Gastrocnemius medialis (tissue), 4 donors: ENCODE measurements at regions of chr12 and their contacts with region 1.

Region 1: DNA sequence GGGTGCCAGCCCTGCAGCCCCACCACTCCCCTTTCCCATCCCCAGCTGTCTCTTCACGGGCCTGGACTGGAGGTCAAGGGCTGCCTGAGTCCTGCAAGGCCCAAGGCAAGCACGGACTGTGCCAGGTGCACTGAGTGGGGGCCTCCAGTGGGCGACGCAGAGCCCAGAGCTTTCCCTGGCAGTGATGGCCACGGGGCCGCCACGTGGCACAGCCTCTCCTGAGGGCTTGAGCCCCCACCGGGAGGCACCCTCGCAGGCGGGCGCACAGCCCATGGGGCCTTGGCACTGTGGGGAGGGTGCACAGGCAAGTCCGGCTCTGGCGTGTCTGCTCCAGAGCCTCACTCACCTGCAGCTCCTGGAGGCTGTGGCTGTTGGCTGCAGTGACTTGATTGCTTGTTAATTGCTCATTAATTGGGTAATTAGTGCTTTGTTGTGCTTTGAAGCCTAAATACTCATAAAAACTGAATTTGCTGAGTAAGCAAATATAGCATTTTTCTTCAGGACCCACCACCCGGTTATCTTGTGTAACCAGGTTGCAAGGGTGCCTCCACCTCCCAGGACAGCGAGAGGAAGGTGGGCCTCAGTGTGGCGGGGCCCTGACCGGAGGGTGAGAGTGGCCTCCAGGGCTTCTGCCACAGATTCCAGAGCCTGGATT is 48.5 kb downstream of the FBRSL1 start:
- DNase-seq: no peak
- ATAC-seq: no peak
- H3K4me3 ChIP-seq: no peak overlapping the region
- H3K27ac ChIP-seq: no peak overlapping the region
- H3K4me1 ChIP-seq: no peaks in the 10 kb centered on the region
- H3K27me3 ChIP-seq: no peaks in the 10 kb centered on the region
- CTCF ChIP-seq: no peak
- POLR2A ChIP-seq: no peak

Region 2: DNA sequence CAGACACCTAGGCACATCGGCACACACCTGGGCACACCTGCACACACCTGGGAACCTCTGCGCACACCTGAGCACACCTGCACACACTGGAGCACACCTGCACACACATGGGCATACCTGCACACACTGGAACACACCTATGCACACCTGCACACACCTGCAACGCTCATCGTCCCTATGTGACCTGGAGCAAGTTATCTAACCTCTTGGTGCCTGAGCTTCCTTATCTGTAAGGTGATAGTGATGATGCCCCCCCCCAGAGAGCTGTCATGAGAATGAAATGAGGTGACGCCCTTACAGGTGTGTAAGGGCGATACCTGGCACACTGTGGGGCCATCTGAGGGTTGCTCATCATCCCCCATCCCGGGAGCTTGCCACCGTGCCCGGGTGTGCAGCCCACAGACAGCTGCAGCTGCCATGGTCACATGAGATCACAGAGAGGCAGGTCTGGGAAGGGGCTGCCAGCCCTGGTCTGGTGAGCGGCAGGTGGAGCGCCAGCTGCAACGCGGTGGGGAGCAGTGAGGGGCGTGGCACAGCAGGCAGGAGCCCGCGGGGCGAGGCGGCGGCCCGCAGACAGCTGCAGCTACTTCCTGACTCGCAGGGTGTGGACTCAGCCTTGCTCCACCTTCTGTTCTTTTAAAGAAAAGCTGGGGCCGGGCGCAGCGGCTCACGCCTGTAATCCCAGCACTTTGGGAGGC is 108.4 kb before region 1 on chr12:
- in situ Hi-C with region 1: loop called in 1 of 4 experiments (anchors 10 kb)
- intact Hi-C with region 1: no loop called
- DNase-seq: no peak
- ATAC-seq: no peak
- H3K4me3 ChIP-seq: no peak overlapping the region
- H3K27ac ChIP-seq: no peak overlapping the region
- H3K4me1 ChIP-seq: no peaks in the 10 kb centered on the region
- H3K27me3 ChIP-seq: peaks cover 49 to 71% (median 68%) of the 10 kb centered on the region in 3 donors
- CTCF ChIP-seq: no peak
- POLR2A ChIP-seq: no peak